ENCODE measurements at regions of chr9 and their contacts with region 1.

Region 1: GRCh38 chr9:72333709-72334108 is 31.3 kb downstream of the ZFAND5 start:
- DNase-seq: no peak
- H3K4me3 ChIP-seq: no peak overlapping the region
- CTCF ChIP-seq: no peak

Region 2: DNA sequence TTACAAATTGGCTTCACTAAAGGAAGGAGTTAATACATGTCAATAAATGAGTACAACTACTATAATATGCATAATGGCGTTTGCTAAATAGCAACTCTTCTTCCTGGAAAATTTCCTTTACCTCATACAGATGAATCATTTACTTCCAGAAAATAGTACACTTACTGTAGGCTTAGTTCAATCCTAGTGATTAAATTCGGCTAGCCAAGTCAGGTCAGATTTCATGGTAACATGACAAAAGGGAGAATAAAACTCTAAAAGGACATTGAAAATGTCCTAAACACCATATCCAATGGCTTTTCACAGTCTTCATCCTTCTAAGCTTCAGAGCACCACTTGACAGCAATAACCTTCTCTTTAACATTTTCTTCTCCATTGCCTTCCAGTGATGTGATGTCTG is 73.4 kb after region 1 on chr9:
- in situ Hi-C with region 1: loop called (anchors 5 kb)
- DNase-seq: no peak
- H3K4me3 ChIP-seq: no peak overlapping the region
- CTCF ChIP-seq: no peak

Measured in astrocyte of the cerebellum (primary cell).